ENCODE measurements at regions of chrX and their contacts with region 1.

Region 1: GRCh38 chrX:49269010-49269767 is 404 bp upstream of the PPP1R3F start:
- DNase-seq: peak; percentile 95 to 99
- ATAC-seq: peak; percentile 95 to 96
- H3K4me3 ChIP-seq: peak overlapping the region; percentile 91
- H3K27ac ChIP-seq: peak overlapping the region; percentile 99
- H3K4me1 ChIP-seq: peaks cover 29% of the 10 kb centered on the region; the same call in 2 of the 3 replicates
- CTCF ChIP-seq: no peak
- EP300 ChIP-seq: no peak
- POLR2A ChIP-seq: peak; percentile 89
- RAD21 ChIP-seq: no peak

Region 2: DNA sequence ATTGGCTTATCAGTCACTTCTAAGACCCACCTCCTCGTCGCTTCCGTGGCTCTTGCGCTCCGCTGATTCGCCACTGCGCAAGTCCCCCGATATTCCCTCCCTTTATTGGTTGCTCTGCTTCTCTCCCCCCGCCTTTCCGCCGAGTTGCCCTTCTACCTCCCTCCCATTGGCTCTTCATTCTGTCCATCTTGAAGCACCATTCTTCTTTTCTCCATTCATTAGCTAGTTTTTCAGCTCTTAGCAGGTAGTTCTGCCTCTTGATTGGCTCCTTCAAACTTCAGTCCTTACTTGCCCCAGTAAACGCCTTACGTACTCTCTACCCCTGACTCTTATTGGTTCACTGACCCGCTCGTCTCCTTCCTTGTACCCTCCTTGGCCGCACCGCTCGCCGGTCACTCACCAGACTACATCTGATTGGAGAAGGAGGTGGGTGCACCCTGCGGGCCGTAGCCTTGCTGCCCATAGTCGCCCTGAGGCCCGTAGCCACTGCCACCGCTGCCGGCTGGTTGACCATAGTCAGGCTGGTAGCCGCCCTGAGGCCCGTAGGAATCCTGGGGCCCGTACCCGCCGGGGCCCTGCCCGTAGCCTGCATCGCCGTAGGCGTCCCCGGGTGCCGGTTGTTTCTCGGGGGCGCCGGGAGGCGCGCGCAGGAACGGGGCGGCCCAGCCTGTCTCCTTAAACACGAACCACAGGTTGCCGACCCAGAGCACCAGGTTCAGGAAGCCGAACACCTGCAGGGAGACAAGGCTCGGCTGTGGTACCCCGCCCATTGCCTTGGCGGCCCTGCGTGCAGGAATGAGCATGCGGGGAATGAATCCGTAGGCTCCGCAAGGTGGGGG is 77.9 kb before region 1 on chrX:
- CTCF ChIA-PET with region 1: interaction called, 4 read pairs
- POLR2A ChIA-PET with region 1: interaction called, 16 read pairs
- DNase-seq: peak; percentile 95 to 100
- ATAC-seq: peak; percentile 91 to 95
- H3K4me3 ChIP-seq: peak overlapping the region; percentile 76
- H3K27ac ChIP-seq: peak overlapping the region; percentile 90 to 98
- H3K4me1 ChIP-seq: peaks cover 24% of the 10 kb centered on the region; the same call in 2 of the 3 replicates
- CTCF ChIP-seq: no peak
- EP300 ChIP-seq: no peak
- POLR2A ChIP-seq: peak; percentile 95
- RAD21 ChIP-seq: no peak

Region 3: DNA sequence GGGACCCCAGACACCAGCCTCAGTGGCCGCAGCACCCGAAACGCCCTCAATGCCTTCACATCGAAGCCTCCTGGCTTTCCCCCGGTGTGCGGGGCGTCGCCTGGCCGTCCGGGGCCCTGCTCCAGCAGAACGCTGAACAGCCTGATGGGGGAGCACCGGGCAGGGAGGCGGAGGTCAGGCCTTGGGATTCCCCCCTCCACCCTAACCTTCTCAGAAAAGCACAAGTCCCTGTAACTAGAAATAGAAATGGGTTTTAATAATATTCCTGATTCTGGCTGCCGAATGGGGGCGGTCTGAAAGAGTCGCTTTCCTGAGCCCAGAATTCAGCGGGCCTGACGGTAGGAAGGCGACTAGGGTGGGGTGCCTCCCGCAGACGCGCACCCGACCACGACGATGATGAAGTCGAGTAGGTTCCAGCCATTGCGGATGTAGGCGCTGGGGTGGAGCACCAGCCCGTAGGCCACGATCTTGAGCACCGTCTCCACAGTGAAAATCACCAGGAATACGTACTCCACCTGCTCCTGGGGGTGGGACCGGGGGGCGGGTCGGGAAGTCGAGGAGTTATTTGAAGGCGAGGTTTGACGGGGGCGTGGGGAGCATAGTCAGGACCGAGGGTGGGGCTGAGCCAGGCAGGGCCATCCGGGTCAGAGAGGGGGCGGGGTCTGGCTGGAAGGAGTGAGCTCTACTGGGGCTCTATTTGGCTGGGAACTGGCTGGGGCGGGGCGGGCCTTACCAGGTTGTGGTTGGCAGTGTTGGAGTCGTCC is 38.5 kb before region 1 on chrX:
- CTCF ChIA-PET with region 1: no interaction called
- POLR2A ChIA-PET with region 1: interaction called, 13 read pairs
- DNase-seq: no peak
- ATAC-seq: peak in 1 of 2 experiments; percentile 37; a peak in 1 of 6 replicates
- H3K4me3 ChIP-seq: no peak overlapping the region
- H3K27ac ChIP-seq: no peak overlapping the region
- H3K4me1 ChIP-seq: no peaks in the 10 kb centered on the region
- CTCF ChIP-seq: no peak
- EP300 ChIP-seq: no peak
- POLR2A ChIP-seq: no peak
- RAD21 ChIP-seq: no peak

Measured in A549 (cell line).